ENCODE measurements at regions of chr19 and their contacts with region 1.

Region 1: DNA sequence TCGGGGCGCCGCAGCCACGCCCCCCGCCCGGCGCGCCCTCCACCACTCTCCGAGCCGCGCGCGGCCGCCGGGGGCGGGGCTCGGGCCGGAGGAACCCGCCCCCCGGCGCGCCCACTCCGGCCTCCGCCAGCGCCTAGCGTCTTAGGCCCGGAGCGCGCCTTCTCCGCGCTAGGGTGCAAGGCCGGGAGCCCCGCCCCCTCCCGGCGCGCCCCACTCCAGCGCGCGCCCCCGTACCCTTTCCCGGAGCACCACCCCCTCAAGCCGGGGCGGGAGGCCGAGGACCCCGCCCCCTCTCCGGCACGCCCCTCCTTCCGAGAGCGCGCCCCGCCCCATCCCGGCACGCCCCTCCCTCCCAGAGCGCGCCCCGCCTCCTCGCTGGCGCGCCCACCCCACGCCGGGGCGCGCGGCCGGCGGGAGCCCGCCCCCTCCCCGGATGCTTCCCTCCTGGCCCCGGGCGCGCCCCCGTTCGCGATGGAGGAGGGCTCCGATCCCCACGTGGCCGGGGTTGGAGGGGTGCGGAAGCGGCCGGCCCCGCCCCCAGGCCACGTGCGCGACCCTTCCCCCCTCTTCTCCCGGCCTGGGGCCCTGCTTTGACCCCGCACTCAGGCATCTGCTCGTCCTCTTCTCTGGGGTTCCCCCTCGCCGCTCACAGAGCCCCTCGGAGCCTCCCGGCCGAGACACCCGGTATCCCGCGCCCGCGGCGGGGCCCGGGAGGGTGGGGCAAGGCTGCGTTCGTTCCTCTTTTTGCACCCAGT is 524 bp upstream of the KLF16 start:
- DNase-seq: peak; percentile 89 to 96 (median 94)
- ATAC-seq: peak; percentile 84
- H3K4me3 ChIP-seq: peak overlapping the region; percentile 79
- H3K4me3 Mint-ChIP-seq: peak overlapping the region; percentile 38 to 82 (median 73)
- H3K27ac ChIP-seq: peak overlapping the region; percentile 78
- H3K27ac Mint-ChIP-seq: peak overlapping the region; percentile 15 to 86 (median 76)
- H3K4me1 ChIP-seq: peaks cover 13 to 32% of the 10 kb centered on the region in 2 donors
- H3K4me1 Mint-ChIP-seq: peaks cover 6 to 46% (median 32%) of the 10 kb centered on the region in 7 donors
- H3K27me3 ChIP-seq: no peaks in the 10 kb centered on the region
- H3K27me3 Mint-ChIP-seq: no peaks in the 10 kb centered on the region

Region 2: DNA sequence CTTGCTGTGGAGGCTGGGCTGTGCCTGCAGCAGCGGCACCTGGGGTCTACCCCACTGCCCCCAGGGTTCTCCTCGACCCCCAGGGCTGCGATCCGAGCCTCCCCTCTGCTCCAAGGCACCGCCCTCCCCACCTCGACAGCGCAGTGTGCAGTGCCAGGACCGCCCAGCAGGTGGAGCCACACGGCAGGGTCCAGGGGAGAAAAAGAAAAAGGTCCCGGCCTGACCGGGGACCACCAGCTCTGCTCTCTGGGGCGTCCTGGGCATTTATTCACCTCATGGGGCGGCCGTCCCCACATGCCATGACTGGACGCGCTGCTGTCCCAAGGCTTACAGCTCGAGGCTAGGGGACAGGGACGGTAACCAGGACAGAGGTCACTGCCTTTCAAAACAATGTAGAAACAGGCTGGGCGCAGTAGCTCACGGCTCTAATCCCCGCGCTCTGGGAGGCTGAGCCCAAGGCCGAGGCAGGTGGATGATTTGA is 26.2 kb before region 1 on chr19:
- CTCF ChIA-PET with region 1: no interaction called
- POLR2A ChIA-PET with region 1: no interaction called
- intact Hi-C with region 1: no loop called
- DNase-seq: peak in 5 of 9 donors; percentile 31 to 75 (median 51)
- ATAC-seq: peak; percentile 84
- H3K4me3 ChIP-seq: no peak overlapping the region
- H3K4me3 Mint-ChIP-seq: peak overlapping the region in 1 of 10 donors; percentile 23
- H3K27ac ChIP-seq: no peak overlapping the region
- H3K27ac Mint-ChIP-seq: no peak overlapping the region
- H3K4me1 ChIP-seq: peaks cover 0 to under 1% of the 10 kb centered on the region in 2 donors
- H3K4me1 Mint-ChIP-seq: peaks cover 18 to 50% (median 35%) of the 10 kb centered on the region in 7 donors
- H3K27me3 ChIP-seq: no peaks in the 10 kb centered on the region
- H3K27me3 Mint-ChIP-seq: no peaks in the 10 kb centered on the region

Region 3: GRCh38 chr19:1848399-1849131 is 15.3 kb before region 1 on chr19 and contains the start of gene REXO1:
- CTCF ChIA-PET with region 1: no interaction called
- POLR2A ChIA-PET with region 1: interaction called, 4 read pairs
- intact Hi-C with region 1: loop called in 1 of 2 experiments (anchors 1 kb)
- DNase-seq: peak; percentile 96 to 100 (median 98)
- ATAC-seq: peak; percentile 90
- H3K4me3 ChIP-seq: peak within 1 kb of the TSS; percentile 85
- H3K4me3 Mint-ChIP-seq: peak within 1 kb of the TSS; percentile 83 to 95 (median 91)
- H3K27ac ChIP-seq: peak within 1 kb of the TSS; percentile 99
- H3K27ac Mint-ChIP-seq: peak within 1 kb of the TSS; percentile 85 to 95 (median 93)
- H3K4me1 ChIP-seq: peaks cover 30 to 67% of the 10 kb centered on the region in 2 donors
- H3K4me1 Mint-ChIP-seq: peaks cover 36 to 72% (median 52%) of the 10 kb centered on the region in 7 donors
- H3K27me3 ChIP-seq: no peaks in the 10 kb centered on the region
- H3K27me3 Mint-ChIP-seq: no peaks in the 10 kb centered on the region
- total RNA-seq, gene REXO1: 52.7 to 92.6 (median 73.1) TPM

Region 4: DNA sequence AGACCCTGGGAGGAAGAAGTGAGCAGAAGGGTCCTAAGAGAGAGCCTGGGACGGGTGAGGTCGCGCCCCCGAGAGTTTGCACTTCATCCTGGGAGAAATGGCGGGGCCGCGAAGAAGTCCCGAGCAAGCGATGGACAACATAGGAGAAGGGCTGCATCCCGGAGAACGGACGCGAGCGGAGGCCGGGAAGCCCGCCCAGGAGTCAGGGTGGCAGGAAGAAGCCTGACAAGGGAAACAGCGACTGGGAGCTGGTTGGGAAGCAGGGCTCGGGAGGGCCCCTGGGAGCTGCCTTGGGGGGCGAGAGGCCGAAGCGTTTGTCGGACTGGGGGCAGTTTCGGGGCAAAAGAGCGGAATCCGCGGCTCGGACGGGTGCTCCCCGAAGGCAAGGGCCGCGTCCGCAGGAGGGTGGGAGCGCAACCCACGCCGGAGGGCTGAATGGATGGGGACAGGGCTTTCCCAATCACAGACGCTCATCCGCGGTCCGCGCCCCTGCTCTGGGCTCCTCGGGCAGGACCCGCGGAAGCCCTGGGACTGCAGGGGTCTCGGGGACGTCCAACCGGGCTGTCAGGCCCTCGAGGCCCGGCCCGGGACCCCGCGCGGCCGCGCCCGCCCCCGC is 20.9 kb after region 1 on chr19:
- CTCF ChIA-PET with region 1: no interaction called
- POLR2A ChIA-PET with region 1: interaction called, 8 read pairs
- intact Hi-C with region 1: loop called (anchors 1 kb)
- DNase-seq: no peak
- ATAC-seq: no peak
- H3K4me3 ChIP-seq: peak overlapping the region; percentile 73
- H3K4me3 Mint-ChIP-seq: peak overlapping the region; percentile 92 to 100 (median 99)
- H3K27ac ChIP-seq: peak overlapping the region; percentile 86
- H3K27ac Mint-ChIP-seq: peak overlapping the region; percentile 96 to 100 (median 98)
- H3K4me1 ChIP-seq: peaks cover 22 to 31% of the 10 kb centered on the region in 2 donors
- H3K4me1 Mint-ChIP-seq: peaks cover 21 to 38% (median 33%) of the 10 kb centered on the region in 7 donors
- H3K27me3 ChIP-seq: no peaks in the 10 kb centered on the region
- H3K27me3 Mint-ChIP-seq: no peaks in the 10 kb centered on the region

Region 5: GRCh38 chr19:1905071-1905862 is 41.4 kb after region 1 on chr19 and contains the starts of genes ADAT3 and SCAMP4:
- CTCF ChIA-PET with region 1: interaction called, 4 read pairs
- POLR2A ChIA-PET with region 1: interaction called, 6 read pairs
- intact Hi-C with region 1: loop called (anchors 1 kb)
- DNase-seq: peak; percentile 90 to 98 (median 97)
- ATAC-seq: peak; percentile 98
- H3K4me3 ChIP-seq: peak within 1 kb of the TSS; percentile 70
- H3K4me3 Mint-ChIP-seq: peak within 1 kb of the TSS; percentile 88 to 96 (median 92)
- H3K27ac ChIP-seq: peak within 1 kb of the TSS; percentile 75
- H3K27ac Mint-ChIP-seq: peak within 1 kb of the TSS; percentile 67 to 96 (median 92)
- H3K4me1 ChIP-seq: peaks cover 10% of the 10 kb centered on the region in 2 donors
- H3K4me1 Mint-ChIP-seq: peaks cover 13 to 57% (median 39%) of the 10 kb centered on the region in 7 donors
- H3K27me3 ChIP-seq: no peaks in the 10 kb centered on the region
- H3K27me3 Mint-ChIP-seq: no peaks in the 10 kb centered on the region
- total RNA-seq, gene ADAT3: 3.5 to 13.5 (median 6.1) TPM
- total RNA-seq, gene SCAMP4: 17.6 to 35.5 (median 23.0) TPM

Region 6: GRCh38 chr19:2050991-2051772 is 187.3 kb after region 1 on chr19 and contains the start of gene MKNK2:
- CTCF ChIA-PET with region 1: no interaction called
- POLR2A ChIA-PET with region 1: no interaction called
- intact Hi-C with region 1: loop called in 1 of 2 experiments (anchors 5 kb)
- DNase-seq: peak; percentile 89 to 100 (median 94)
- ATAC-seq: peak; percentile 91
- H3K4me3 ChIP-seq: peak within 1 kb of the TSS; percentile 98
- H3K4me3 Mint-ChIP-seq: peak within 1 kb of the TSS; percentile 83 to 90 (median 86)
- H3K27ac ChIP-seq: peak within 1 kb of the TSS; percentile 90
- H3K27ac Mint-ChIP-seq: peak within 1 kb of the TSS; percentile 87 to 96 (median 94)
- H3K4me1 ChIP-seq: peaks cover 45 to 58% of the 10 kb centered on the region in 2 donors
- H3K4me1 Mint-ChIP-seq: peaks cover 9 to 57% (median 30%) of the 10 kb centered on the region in 7 donors
- H3K27me3 ChIP-seq: no peaks in the 10 kb centered on the region
- H3K27me3 Mint-ChIP-seq: no peaks in the 10 kb centered on the region
- total RNA-seq, gene MKNK2: 190 to 347 (median 238) TPM

Region 7: GRCh38 chr19:2139385-2140137 is 275.7 kb after region 1 on chr19:
- CTCF ChIA-PET with region 1: no interaction called
- POLR2A ChIA-PET with region 1: no interaction called
- intact Hi-C with region 1: no loop called
- DNase-seq: no peak
- ATAC-seq: no peak
- H3K4me3 ChIP-seq: no peak overlapping the region
- H3K4me3 Mint-ChIP-seq: no peak overlapping the region
- H3K27ac ChIP-seq: no peak overlapping the region
- H3K27ac Mint-ChIP-seq: no peak overlapping the region
- H3K4me1 ChIP-seq: no peaks in the 10 kb centered on the region
- H3K4me1 Mint-ChIP-seq: peaks cover 0 to 21% (median 9%) of the 10 kb centered on the region in 7 donors
- H3K27me3 ChIP-seq: no peaks in the 10 kb centered on the region
- H3K27me3 Mint-ChIP-seq: no peaks in the 10 kb centered on the region

Measured in naive thymus-derived CD4-positive, alpha-beta T cell (primary cell).